ENCODE measurements at regions of chr12 and their contacts with region 1.

Region 1: GRCh38 chr12:121351820-121352681 is at the start of gene ANAPC5:
- DNase-seq: peak; percentile 98
- total RNA-seq, gene ANAPC5: 80.6 to 83.9 TPM

Region 2: DNA sequence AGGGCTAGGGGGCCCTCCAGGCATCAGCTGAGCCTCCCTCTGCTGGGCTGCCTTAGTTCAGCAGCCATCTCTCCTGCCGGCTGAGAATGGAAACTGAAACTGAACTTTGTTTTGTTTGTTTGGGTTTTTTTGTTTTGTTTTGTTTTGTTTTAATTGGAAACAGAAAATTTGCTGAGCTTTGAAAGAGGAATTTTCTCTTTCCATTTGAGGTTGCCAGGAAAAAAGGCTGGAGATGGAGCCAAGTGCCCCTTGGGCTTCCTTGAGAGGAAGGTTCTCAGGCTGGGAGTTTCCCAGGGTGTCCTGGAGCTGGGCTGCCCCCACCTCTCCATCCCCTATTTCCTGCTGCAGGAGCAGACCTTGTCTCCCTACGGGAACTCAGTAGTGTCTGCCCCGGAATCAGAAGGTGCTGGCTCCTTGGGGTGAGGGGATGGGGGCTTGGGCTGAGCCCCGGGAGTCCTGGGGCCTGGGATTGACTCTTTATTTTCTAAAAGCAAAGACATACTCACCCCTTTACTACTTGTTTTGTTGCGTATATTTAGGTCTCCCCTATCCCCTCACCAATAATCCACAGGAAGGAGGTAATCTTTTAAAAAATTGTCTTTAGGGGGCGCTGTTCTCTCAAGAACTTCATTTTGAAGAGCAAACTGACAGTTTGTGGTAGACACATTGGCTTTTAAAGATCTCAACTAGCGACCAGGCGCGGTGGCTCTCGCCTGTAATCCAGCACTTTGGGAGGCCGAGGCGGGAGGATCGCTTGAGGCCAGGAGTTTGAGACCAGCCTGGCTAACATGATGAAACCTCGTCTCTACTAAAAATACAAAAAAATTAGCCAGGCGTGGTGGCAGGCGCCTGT is 291.7 kb before region 1 on chr12:
- intact Hi-C with region 1: no loop called
- DNase-seq: no peak

Region 3: DNA sequence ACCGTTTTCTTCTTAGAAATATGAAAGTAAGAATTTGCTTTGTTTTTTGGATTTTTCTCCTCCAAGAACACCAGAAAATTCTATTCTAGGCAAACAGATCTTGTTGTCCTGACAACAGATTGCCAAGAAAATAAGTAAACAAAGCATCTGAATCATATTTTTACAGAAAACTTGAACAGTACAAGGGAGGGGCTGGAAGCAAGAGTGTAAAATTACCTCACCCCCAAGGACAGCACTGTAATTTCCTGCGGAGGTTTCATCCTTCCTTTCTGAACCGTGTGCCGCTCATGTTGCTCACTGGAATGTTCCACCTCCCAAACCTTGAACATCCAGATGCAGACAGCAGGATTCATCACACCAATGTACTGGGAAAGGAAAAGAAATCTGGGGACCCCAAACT is 50.2 kb before region 1 on chr12:
- intact Hi-C with region 1: loop called in 1 of 2 experiments (anchors 1 kb)
- DNase-seq: peak; percentile 10

Region 4: DNA sequence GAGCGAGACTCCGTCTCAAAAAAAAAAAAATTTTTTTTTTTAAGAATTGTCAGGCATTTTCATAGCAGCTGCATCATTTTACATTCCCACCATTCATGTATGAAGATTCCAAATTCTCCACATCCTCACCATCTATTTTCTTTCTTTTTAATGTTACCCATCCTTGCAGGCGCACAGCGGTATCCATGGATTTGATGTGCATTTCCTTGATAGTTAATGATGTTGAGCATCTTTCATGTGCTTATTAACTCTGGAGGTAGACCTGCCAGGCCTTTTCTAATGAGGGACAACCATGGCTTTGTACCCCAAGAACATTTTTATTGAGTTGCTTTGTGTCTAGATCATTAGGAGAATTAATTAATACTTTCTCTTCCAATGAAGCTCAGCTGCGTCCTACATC is 46.3 kb after region 1 on chr12:
- intact Hi-C with region 1: loop called in 1 of 2 experiments (anchors 1 kb)
- DNase-seq: no peak

Region 5: GRCh38 chr12:122526683-122527477 is 1174.8 kb after region 1 on chr12 and contains the starts of genes KNTC1 and RSRC2:
- intact Hi-C with region 1: loop called in 1 of 2 experiments (anchors 5 kb)
- DNase-seq: peak; percentile 98
- total RNA-seq, gene KNTC1: 10.9 to 12.3 TPM
- total RNA-seq, gene RSRC2: 52.5 to 60.6 TPM